Activated CD8-positive, alpha-beta memory T cell treated with anti-CD3 and anti-CD28 coated beads, Interleukin-2, amount 10 ng/mL, durations not matched to agents 7 days and 5 days (primary cell): ENCODE measurements at regions of chr10 and their contacts with region 1.

Region 1: GRCh38 chr10:94320285-94320914 is 42.3 kb downstream of the NOC3L start:
- DNase-seq: peak; percentile 66
- ATAC-seq: peak; percentile 45
- H3K4me3 Mint-ChIP-seq: no peak overlapping the region
- H3K27ac Mint-ChIP-seq: no peak overlapping the region
- H3K4me1 Mint-ChIP-seq: peaks cover 2% of the 10 kb centered on the region
- H3K27me3 Mint-ChIP-seq: no peaks in the 10 kb centered on the region

Region 2: DNA sequence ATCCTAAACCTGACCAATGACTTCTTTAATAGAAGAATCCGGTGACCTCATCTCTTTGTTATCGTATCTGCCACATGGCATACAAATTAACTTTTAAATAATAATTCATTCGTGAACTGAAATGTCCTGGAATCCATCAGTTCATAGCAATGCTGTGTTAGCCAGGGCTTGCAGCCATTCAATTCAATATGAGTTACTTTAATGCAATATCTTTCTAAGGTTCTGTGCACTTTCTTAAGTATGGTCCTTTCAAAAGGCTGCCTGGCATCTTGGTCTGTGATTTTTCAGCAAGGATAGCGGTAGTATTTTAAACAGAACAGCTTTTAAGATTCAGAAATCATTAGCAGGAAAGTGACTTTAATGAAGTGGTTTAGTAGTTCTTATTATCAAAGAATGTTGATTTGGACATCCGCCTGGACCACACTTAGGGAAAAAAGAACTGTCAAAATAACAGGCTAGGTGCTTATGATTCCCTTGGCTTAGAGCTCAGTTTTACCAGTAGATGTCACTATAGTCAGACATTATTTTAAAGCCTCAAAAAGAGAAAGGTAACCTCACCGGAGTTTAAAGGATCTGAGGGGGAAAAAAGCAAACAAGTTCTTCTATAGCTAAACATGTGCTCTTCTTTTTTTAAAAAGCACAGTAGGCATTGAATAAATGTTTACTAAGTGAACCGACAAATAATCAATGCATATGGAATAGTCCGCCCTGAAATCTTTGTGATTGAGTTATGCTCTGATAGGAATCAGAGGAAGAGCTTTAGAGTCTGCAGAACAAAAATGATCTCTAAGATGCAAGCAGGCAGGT is 403.9 kb before region 1 on chr10:
- CTCF ChIA-PET with region 1: interaction called, 18 read pairs
- DNase-seq: no peak
- ATAC-seq: no peak
- H3K4me3 Mint-ChIP-seq: no peak overlapping the region
- H3K27ac Mint-ChIP-seq: no peak overlapping the region
- H3K4me1 Mint-ChIP-seq: no peaks in the 10 kb centered on the region
- H3K27me3 Mint-ChIP-seq: no peaks in the 10 kb centered on the region

Region 3: DNA sequence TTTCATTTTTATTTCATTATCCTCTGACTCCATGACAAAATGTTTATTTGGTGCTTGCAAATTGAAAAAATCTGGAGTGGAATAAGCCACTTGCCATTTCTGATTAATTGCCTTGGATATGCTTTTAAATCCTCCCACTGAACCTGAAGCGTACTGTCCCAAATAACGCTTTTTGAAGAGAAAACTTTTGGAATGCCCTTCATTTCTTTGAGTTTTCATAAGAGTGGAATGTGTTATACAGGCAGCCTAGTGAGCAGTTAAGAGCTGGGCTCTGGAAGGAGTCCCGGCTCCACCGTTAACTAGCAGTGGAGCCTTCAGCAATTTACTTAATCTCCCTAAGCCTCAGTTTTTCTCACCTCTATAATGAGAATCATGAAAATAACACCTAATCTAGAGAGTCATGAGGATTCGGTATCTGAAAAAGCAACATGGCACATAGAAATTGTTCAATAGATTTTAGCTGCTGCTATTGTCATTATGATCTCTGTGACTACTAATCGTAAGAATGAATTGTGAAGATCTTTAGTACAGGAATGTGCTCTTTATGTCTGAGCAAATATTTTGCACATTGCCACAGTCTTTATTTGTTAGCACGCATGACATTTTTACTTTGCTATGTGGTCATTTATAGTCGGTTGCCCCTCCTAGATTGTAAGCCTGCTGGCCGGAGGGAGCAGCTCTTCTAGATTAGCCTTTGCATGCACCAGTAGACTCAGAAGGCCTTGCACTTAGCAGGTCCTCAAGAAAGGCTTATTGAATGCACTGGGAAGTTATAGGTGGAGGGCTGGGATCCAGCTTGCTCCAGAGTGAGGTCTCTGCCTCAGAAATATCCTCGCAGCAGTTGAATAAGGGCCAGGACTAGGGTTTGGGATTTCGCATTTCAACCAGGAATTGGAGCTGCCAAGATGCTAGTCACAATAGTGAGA is 267.3 kb before region 1 on chr10:
- CTCF ChIA-PET with region 1: no interaction called
- DNase-seq: no peak
- ATAC-seq: no peak
- H3K4me3 Mint-ChIP-seq: no peak overlapping the region
- H3K27ac Mint-ChIP-seq: no peak overlapping the region
- H3K4me1 Mint-ChIP-seq: no peaks in the 10 kb centered on the region
- H3K27me3 Mint-ChIP-seq: peaks cover 1% of the 10 kb centered on the region

Region 4: DNA sequence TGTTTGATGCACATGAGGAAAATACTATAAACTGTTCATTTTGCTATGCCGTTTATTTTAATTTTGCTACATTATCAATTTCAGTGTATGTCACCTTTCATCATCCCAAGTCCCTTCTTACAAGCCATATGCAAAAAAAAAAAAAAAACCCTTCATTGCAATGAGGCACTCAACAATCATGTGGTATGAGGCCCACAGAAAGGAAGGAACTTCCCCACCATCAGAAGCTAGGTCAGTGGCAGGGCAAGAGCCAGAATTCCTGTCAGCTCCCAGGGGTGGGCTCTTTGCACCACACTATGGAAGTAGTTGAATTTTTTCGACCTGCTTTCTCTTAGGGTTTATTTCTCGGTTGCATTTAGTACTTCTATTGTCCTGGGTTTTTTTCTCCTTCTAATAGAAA is 33.1 kb before region 1 on chr10:
- CTCF ChIA-PET with region 1: interaction called, 20 read pairs
- DNase-seq: no peak
- ATAC-seq: no peak
- H3K4me3 Mint-ChIP-seq: no peak overlapping the region
- H3K27ac Mint-ChIP-seq: no peak overlapping the region
- H3K4me1 Mint-ChIP-seq: peaks cover 9% of the 10 kb centered on the region
- H3K27me3 Mint-ChIP-seq: peaks cover 31% of the 10 kb centered on the region

Region 5: GRCh38 chr10:94310369-94310768 is 10.0 kb before region 1 on chr10:
- CTCF ChIA-PET with region 1: interaction called, 18 read pairs
- DNase-seq: no peak
- ATAC-seq: no peak
- H3K4me3 Mint-ChIP-seq: no peak overlapping the region
- H3K27ac Mint-ChIP-seq: no peak overlapping the region
- H3K4me1 Mint-ChIP-seq: peaks cover 6% of the 10 kb centered on the region
- H3K27me3 Mint-ChIP-seq: peaks cover 26% of the 10 kb centered on the region

Region 6: DNA sequence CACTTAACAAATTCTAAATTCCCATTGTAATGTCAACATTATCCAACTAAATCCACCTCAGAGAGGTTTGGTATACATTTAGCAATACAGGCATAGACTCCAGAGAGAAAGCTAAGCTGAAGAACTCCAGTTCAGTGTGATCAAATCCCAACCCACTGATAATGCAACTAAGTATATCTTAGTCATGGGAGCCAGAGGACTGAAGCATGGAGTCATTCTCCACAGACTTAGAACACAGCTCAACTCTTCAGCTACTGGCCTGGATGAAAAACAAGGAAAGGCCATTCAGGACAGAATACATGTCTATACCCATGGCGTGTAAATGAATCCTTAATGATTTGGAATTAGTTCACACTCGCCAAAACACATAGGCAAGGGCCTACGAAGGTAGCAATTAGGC is 14.5 kb after region 1 on chr10:
- CTCF ChIA-PET with region 1: interaction called, 29 read pairs
- DNase-seq: no peak
- ATAC-seq: no peak
- H3K4me3 Mint-ChIP-seq: no peak overlapping the region
- H3K27ac Mint-ChIP-seq: no peak overlapping the region
- H3K4me1 Mint-ChIP-seq: no peaks in the 10 kb centered on the region
- H3K27me3 Mint-ChIP-seq: no peaks in the 10 kb centered on the region

Region 7: GRCh38 chr10:94344522-94345122 is 24.2 kb after region 1 on chr10:
- CTCF ChIA-PET with region 1: interaction called, 12 read pairs
- DNase-seq: no peak
- ATAC-seq: no peak
- H3K4me3 Mint-ChIP-seq: no peak overlapping the region
- H3K27ac Mint-ChIP-seq: no peak overlapping the region
- H3K4me1 Mint-ChIP-seq: peaks cover 6% of the 10 kb centered on the region
- H3K27me3 Mint-ChIP-seq: no peaks in the 10 kb centered on the region

Region 8: GRCh38 chr10:94443549-94443948 is 123.1 kb after region 1 on chr10:
- CTCF ChIA-PET with region 1: interaction called, 10 read pairs
- DNase-seq: no peak
- ATAC-seq: no peak
- H3K4me3 Mint-ChIP-seq: no peak overlapping the region
- H3K27ac Mint-ChIP-seq: no peak overlapping the region
- H3K4me1 Mint-ChIP-seq: peaks cover 2% of the 10 kb centered on the region
- H3K27me3 Mint-ChIP-seq: peaks cover 17% of the 10 kb centered on the region